Naive thymus-derived CD4-positive, alpha-beta T cell (primary cell): ENCODE measurements at regions of chr2 and their contacts with region 1.

Region 1: GRCh38 chr2:118604371-118604770 is 243.1 kb downstream of the EN1 start:
- DNase-seq: no peak
- ATAC-seq: no peak
- H3K4me3 ChIP-seq: no peak overlapping the region
- H3K4me3 Mint-ChIP-seq: no peak overlapping the region
- H3K27ac ChIP-seq: no peak overlapping the region
- H3K27ac Mint-ChIP-seq: no peak overlapping the region
- H3K4me1 ChIP-seq: no peaks in the 10 kb centered on the region
- H3K4me1 Mint-ChIP-seq: no peaks in the 10 kb centered on the region
- H3K27me3 ChIP-seq: no peaks in the 10 kb centered on the region
- H3K27me3 Mint-ChIP-seq: peaks cover 0 to 36% (median 12%) of the 10 kb centered on the region in 5 donors

Region 2: DNA sequence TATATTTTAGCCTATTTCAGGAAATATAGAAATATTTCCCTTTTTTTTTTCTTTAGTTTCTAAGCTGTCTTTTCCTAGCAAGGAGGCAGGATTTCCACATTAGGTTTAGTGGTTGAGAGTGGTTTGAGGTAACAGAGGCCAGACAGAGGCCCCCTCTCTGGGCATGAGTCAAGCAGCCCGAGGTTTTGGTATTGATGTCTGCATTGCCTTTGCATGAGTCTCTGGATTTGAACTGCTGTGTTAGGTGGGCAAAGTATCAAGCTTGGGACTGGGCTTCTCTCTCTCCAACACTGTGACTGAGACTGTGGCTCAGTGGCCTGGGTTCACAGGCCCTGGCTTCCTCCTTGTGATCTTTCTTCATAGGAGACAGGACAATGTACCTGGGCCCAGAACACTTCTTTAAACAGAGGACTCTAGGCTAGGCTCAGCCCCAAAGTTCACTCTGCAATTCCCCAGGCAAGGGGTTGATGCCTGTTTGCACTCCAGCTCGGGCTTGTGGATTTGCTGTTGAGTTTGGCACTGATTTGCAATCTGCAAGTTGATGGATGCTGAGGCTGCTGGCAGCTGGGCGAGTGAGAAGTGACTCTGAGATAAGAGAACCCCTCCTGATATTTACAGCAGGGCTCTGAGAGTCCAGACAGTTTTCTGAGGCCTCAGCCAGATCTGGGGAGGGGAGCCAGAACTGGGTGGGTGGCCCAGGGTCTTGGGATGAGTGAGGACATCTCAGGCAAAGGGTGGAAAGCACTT is 28.1 kb before region 1 on chr2:
- CTCF ChIA-PET with region 1: no interaction called
- POLR2A ChIA-PET with region 1: no interaction called
- intact Hi-C with region 1: loop called in 1 of 2 experiments (anchors 1 kb)
- DNase-seq: no peak
- ATAC-seq: no peak
- H3K4me3 ChIP-seq: no peak overlapping the region
- H3K4me3 Mint-ChIP-seq: no peak overlapping the region
- H3K27ac ChIP-seq: no peak overlapping the region
- H3K27ac Mint-ChIP-seq: no peak overlapping the region
- H3K4me1 ChIP-seq: no peaks in the 10 kb centered on the region
- H3K4me1 Mint-ChIP-seq: peaks cover 0 to 2% (median 0%) of the 10 kb centered on the region in 7 donors
- H3K27me3 ChIP-seq: no peaks in the 10 kb centered on the region
- H3K27me3 Mint-ChIP-seq: peaks cover 0 to 24% (median 11%) of the 10 kb centered on the region in 5 donors